Posterior cingulate gyrus (tissue), 11 donors: ENCODE measurements at regions of chr2 and their contacts with region 1.

Region 1: DNA sequence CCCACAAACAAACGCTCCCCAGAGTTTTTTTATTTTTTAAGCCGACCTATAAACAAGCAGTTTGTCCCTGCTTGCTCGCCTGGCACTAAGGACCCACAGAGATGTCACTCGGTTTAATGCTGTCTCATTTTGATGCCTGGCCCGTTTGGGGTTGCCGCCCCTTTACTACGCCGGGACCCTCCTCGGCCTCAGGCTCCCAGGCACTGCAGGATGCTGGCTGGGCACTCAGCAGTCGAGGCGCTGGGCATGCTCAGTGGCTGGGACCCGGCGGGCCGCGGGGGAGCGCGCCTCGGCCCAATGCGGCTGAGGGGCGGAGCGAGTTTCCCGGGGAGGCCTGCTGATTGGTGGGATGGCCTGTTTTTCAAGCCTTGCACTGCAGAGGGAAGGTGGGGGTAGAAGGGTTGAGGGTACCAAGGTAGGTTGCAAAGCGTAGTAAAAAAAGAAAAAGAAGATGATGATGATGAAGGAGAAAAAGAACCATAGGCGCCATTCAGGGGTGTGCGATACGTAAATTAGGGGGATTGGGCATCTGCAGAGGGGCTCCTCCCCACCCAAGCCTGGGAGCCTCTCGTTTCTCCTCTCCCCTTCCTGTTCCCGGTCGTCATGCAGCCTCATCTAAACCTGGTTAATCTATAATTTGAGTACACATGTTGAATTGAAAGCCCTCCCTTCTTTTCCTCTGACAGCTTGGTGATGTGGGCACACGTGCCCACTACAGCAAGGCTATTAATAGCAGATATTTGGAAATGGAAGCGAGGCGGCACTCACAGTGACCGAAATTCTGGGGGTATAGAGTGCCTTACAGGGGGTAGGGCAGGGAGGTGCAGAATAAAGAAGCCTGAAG is 1.5 kb upstream of the IRS1 start:
- DNase-seq: peak; percentile 92 to 99 (median 95)

Region 2: DNA sequence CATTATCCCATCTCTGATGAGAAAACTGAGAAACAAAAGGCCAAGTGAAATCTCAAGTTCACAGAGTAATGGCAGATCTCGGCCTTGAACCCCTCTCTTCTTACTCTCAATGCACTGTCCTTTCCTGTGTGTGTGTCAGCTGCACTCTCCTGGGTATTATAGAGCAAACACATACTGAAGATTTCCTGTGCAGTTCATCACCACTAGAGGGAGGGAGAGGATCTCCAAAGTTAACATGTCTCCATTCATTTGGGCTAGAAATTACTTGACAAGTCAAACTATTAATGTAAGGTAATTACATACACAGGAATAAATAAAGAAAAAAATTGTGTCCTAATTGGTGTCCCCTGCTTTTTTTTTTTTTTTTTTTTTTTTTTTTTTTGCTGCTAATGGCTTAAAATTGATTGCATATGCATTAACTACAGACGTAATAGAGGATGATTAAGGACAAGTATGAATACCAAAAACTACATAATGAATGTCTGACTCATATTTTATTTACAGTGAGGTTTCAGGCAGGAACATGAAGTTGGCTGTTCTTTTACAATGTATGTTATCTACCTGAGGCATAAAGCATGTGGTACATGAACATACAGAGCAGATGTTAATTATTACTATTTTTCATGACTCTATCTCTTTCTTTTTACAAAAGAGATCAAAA is 1132.4 kb before region 1 on chr2:
- intact Hi-C with region 1: loop called (anchors 2 kb)
- DNase-seq: no peak

Region 3: GRCh38 chr2:225894240-225894980 is 906.8 kb before region 1 on chr2:
- intact Hi-C with region 1: loop called (anchors 5 kb)
- DNase-seq: no peak

Region 4: GRCh38 chr2:226215902-226216503 is 585.2 kb before region 1 on chr2:
- intact Hi-C with region 1: loop called (anchors 2 kb)
- DNase-seq: peak in 6 of 10 donors; percentile 7 to 86 (median 42)

Region 5: DNA sequence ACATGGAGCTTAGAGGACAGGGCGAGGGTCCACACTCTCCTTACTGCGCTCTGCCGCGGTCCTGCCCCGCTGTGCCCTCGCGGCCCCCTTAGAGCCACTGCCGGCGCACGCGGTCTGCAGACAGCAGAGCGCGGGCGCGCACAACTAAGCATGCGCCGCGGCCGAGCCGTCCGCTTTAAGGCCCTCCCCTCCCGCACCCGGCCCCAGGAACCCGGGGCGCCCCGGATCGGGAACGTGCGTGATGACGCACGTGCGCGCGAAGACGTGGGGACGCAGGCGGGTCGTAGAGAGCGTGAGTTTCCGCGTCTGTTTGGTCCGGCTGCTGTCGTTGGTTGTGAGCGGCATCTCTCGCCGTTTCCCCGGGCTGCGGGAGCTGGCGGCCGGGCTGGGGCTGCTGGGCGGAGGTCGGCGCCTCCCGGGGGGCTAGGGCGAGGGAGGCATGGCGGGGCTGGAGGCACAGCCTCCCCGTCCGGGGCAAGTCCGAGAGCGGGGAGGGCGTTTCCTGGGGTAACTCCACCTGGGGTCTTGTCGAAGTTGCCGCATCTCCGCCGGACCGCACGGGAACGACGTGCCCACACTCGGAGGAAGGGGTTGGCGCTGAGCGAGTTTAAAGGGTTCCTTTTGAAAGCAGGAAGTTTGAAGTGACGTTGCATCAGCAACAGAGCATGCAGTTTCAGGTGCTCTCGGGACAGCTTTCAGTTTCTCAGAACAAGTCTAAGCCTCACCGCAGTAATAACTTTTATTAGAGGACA is 34.8 kb after region 1 on chr2 and contains the start of gene RHBDD1:
- intact Hi-C with region 1: no loop called
- DNase-seq: peak; percentile 86 to 99 (median 93)

Region 6: GRCh38 chr2:227335713-227336112 is 534.5 kb after region 1 on chr2:
- intact Hi-C with region 1: no loop called
- DNase-seq: no peak